HCT116 (cell line): ENCODE measurements at regions of chr20 and their contacts with region 1.

Region 1: GRCh38 chr20:59850018-59850641 is 83.3 kb downstream of the SYCP2 start:
- DNase-seq: peak; percentile 28
- ATAC-seq: peak; percentile 78
- H3K4me3 ChIP-seq: no peak overlapping the region
- H3K27ac ChIP-seq: no peak overlapping the region
- H3K4me1 ChIP-seq: no peaks in the 10 kb centered on the region
- H3K27me3 ChIP-seq: peaks cover 23% of the 10 kb centered on the region
- CTCF ChIP-seq: peak; percentile 40 to 53 (median 43); a peak in 5 of 6 replicates
- POLR2A ChIP-seq: no peak
- RAD21 ChIP-seq: peak; percentile 43; the same call in 1 of the 2 replicates

Region 2: DNA sequence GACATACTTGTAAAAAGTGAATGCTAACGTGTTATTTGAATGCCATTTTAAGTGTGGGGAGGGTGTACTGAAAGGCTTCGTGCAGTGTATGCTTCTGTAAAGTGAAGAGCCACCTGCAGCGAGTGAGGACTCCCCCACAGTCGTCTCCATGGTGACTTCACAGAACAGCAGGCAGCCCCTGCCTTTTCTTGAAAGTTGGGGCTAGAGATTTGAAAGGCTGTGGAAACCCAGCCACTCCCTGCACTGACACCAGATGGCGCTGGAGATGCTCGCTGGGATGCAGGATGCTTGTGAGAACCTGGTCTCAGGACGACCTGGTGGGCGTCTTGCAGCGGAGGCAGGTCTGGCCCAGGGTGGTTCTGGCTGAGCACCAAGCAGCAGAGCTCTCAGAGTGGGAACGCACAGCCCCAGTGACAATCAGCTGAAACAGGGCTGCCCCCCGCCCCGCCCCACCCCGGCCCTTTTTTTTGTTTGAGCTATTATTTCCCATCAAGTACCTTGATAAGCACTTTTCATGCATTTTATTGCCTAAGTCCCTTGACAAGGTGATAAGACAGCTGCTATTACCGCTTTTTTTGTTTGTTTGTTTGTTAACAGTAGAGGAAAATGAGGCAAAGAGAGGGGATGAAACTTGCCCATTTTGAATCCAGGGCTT is 67.0 kb before region 1 on chr20:
- CTCF ChIA-PET with region 1: interaction called, 54 read pairs
- POLR2A ChIA-PET with region 1: no interaction called
- RAD21 ChIA-PET with region 1: interaction called in 1 of 2 experiments, 3 read pairs
- intact Hi-C with region 1: loop called (anchors 1 kb)
- DNase-seq: peak; percentile 32
- ATAC-seq: peak; percentile 90
- H3K4me3 ChIP-seq: no peak overlapping the region
- H3K27ac ChIP-seq: no peak overlapping the region
- H3K4me1 ChIP-seq: no peaks in the 10 kb centered on the region
- H3K27me3 ChIP-seq: 0 out of 2 replicates have a peak, but pooled peaks cover 3% of the 10 kb centered on the region
- CTCF ChIP-seq: peak; percentile 40 to 96 (median 84); a peak in 4 of 6 replicates
- POLR2A ChIP-seq: no peak
- RAD21 ChIP-seq: peak; percentile 55

Region 3: GRCh38 chr20:59825944-59826771 is 24.0 kb before region 1 on chr20:
- CTCF ChIA-PET with region 1: no interaction called
- POLR2A ChIA-PET with region 1: no interaction called
- RAD21 ChIA-PET with region 1: no interaction called
- intact Hi-C with region 1: no loop called
- DNase-seq: no peak
- ATAC-seq: peak; percentile 42; the same call in 1 of the 2 replicates
- H3K4me3 ChIP-seq: no peak overlapping the region
- H3K27ac ChIP-seq: no peak overlapping the region
- H3K4me1 ChIP-seq: no peaks in the 10 kb centered on the region; a peak in 1 of 4 replicates
- H3K27me3 ChIP-seq: peaks cover 12% of the 10 kb centered on the region; the same call in 1 of the 2 replicates
- CTCF ChIP-seq: no peak
- POLR2A ChIP-seq: no peak
- RAD21 ChIP-seq: no peak

Region 4: DNA sequence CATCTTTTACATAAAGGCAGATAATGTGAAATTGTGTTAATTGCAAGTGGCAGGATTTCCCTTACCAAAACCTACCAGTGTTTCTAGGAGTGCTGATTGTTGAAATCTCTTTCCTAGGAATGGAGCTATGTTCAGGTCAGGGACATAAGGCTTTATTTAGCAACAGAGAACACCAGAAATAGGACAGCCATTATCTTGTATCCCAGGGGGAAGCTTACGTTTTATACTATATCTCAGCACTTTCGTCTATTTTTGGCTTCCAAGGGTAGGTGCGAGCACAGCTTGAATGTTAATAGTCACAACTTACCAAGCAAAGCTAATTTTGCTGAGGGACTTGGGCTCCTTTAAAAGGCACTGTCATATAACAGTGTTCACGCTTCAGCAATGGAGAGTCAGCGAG is 10.7 kb before region 1 on chr20:
- CTCF ChIA-PET with region 1: interaction called, 11 read pairs
- POLR2A ChIA-PET with region 1: no interaction called
- RAD21 ChIA-PET with region 1: no interaction called
- intact Hi-C with region 1: no loop called
- DNase-seq: no peak
- ATAC-seq: no peak
- H3K4me3 ChIP-seq: no peak overlapping the region
- H3K27ac ChIP-seq: no peak overlapping the region
- H3K4me1 ChIP-seq: no peaks in the 10 kb centered on the region
- H3K27me3 ChIP-seq: peaks cover 85% of the 10 kb centered on the region
- CTCF ChIP-seq: no peak
- POLR2A ChIP-seq: no peak
- RAD21 ChIP-seq: no peak